Activated B cell treated with CpG ODN at 0.5 μM for 24 hours (primary cell): ENCODE measurements at regions of chr2 and their contacts with region 1.

Region 1: DNA sequence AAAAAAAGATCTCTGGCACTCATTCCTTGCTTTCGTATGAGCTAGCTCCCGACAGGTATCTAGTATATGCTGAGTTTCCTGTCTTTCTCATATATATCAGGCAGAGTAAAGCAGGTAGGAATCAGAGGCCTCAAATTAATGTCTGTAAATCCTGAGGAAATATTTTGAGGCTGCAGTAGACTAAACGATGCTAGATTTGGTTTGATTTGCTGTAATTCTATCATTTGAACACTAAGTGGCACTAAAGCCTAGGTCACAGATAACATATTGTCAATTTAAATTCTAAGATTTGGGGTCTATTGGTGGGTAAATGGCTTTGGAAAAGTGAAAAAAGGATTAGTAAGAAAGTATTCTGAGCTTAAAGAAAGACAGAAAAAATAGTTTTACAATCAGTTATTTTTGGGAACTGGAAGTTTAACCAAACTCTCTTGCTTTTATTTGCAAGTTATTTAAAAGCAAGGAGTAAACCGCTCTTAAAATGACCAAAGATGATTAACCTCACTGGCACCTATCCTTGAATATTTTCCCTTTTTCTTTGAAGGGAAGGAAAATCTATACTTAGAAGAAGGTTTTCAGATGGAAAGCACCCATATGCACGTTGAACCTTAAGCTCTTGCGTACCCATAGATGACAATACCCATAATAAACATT is 37.6 kb upstream of the SLC4A10 start:
- DNase-seq: no peak
- ATAC-seq: no peak
- H3K4me3 Mint-ChIP-seq: no peak overlapping the region
- H3K27ac Mint-ChIP-seq: no peak overlapping the region
- H3K4me1 Mint-ChIP-seq: no peaks in the 10 kb centered on the region
- H3K27me3 Mint-ChIP-seq: no peaks in the 10 kb centered on the region
- CTCF ChIP-seq: no peak

Region 2: DNA sequence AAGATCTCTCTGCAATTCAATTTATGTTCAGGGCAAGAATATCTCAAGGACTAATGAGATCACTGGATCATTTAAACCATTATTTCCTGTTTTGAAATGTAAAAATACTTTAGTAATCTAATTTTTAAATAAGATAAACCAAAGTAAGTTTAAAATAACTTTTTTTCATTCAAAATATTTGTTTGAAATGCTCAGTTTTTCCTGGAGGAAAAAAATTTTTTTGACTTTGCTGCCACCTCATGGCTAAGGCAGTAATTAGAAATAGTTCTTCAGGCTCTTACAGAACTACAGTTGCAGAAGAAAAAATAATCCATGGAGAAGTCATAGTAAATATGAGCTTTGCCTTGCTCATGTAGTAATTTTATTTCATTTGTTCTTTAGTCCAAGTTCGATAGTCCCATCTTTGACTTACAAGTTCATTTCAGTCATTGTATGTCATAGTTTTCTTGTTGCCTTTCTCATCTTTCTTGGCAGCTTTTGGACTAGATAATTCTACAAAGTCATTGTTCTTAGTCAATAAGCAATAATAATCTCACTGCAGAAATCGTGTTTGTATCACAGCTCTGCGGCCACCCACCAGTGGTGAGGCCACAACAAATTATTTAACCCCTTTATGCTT is 360.0 kb after region 1 on chr2:
- CTCF ChIA-PET with region 1: interaction called, 3 read pairs
- POLR2A ChIA-PET with region 1: no interaction called
- intact Hi-C with region 1: loop called (anchors 1 kb)
- DNase-seq: no peak
- ATAC-seq: no peak
- H3K4me3 Mint-ChIP-seq: no peak overlapping the region
- H3K27ac Mint-ChIP-seq: no peak overlapping the region
- H3K4me1 Mint-ChIP-seq: no peaks in the 10 kb centered on the region
- H3K27me3 Mint-ChIP-seq: no peaks in the 10 kb centered on the region
- CTCF ChIP-seq: no peak